ENCODE measurements at regions of chr18 and their contacts with region 1.

Region 1: GRCh38 chr18:20971886-20972267 is 139.7 kb downstream of the ROCK1 start:
- DNase-seq: peak; percentile 37
- H3K4me3 ChIP-seq: no peak overlapping the region
- H3K27ac ChIP-seq: no peak overlapping the region
- H3K4me1 ChIP-seq: no peaks in the 10 kb centered on the region
- CTCF ChIP-seq: peak; percentile 75

Region 2: DNA sequence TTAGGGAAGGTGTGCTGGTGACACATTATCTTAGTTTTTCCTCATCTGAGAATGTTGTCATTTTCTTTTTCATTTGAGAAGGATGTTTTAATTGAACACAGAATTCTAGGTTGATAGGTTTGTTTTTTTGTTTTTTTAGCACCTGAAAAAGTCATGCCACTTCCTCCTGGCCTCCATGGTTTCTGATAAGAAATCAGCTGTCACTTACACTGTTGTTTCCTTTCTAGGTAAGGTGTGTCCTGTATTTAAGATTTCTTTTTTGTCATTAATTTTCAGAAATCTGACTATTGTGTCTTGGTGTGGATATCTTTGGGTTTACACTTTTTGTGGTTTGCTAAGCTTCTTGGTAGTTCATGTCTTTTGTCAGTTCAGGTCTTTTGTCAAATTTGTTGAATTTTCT is 40.4 kb after region 1 on chr18:
- CTCF ChIA-PET with region 1: interaction called, 3 read pairs
- POLR2A ChIA-PET with region 1: no interaction called
- intact Hi-C with region 1: loop called (anchors 5 kb)
- DNase-seq: peak; percentile 6
- H3K4me3 ChIP-seq: no peak overlapping the region
- H3K27ac ChIP-seq: no peak overlapping the region
- H3K4me1 ChIP-seq: no peaks in the 10 kb centered on the region
- CTCF ChIP-seq: no peak

Region 3: GRCh38 chr18:21074336-21075323 is 102.8 kb after region 1 on chr18:
- CTCF ChIA-PET with region 1: no interaction called
- POLR2A ChIA-PET with region 1: no interaction called
- intact Hi-C with region 1: no loop called
- DNase-seq: peak; percentile 15
- H3K4me3 ChIP-seq: peak overlapping the region; percentile 36
- H3K27ac ChIP-seq: peak overlapping the region; percentile 33
- H3K4me1 ChIP-seq: peaks cover 44% of the 10 kb centered on the region
- CTCF ChIP-seq: no peak

Region 4: GRCh38 chr18:21099442-21099841 is 127.6 kb after region 1 on chr18:
- CTCF ChIA-PET with region 1: no interaction called
- POLR2A ChIA-PET with region 1: no interaction called
- intact Hi-C with region 1: no loop called
- DNase-seq: peak; percentile 82
- H3K4me3 ChIP-seq: peak overlapping the region; percentile 55
- H3K27ac ChIP-seq: peak overlapping the region; percentile 73
- H3K4me1 ChIP-seq: peaks cover 65% of the 10 kb centered on the region
- CTCF ChIP-seq: no peak

Region 5: GRCh38 chr18:21111341-21112139 is 139.7 kb after region 1 on chr18 and contains the start of gene ROCK1:
- CTCF ChIA-PET with region 1: no interaction called
- POLR2A ChIA-PET with region 1: interaction called, 6 read pairs
- intact Hi-C with region 1: loop called (anchors 10 kb)
- DNase-seq: peak; percentile 95
- H3K4me3 ChIP-seq: peak within 1 kb of the TSS; percentile 90
- H3K27ac ChIP-seq: peak within 1 kb of the TSS; percentile 89
- H3K4me1 ChIP-seq: peaks cover 30% of the 10 kb centered on the region
- CTCF ChIP-seq: no peak
- total RNA-seq, gene ROCK1: 43.2 and 48.5 TPM in 2 replicates

Region 6: DNA sequence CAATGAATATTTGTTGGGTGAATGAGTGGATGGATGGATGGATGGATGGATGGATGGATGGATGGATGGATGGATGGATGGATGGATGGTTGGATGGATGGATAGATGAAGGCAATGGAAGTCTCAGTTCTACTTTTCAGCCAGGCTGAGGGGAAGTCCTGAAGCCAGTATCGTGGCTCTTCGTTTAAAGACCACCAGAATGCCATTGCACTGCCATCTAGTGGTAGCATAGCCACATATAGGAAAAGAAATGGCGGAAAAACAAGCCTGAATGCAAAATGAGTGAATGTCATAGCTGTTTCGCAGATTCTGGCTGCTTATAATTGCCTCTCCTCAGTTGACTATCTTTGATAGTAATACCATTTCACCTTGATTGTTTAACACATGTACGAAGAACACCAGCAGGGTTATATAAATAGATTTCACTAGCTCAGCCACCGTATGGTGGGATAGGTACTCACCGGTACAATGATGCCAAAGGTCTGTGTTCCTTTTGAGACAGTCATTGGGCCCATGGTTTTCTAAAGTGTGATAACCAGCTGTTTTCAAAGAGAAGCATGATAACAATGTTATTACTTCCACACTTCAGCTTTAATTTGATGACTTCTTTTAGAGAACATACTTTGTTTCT is 207.8 kb after region 1 on chr18:
- CTCF ChIA-PET with region 1: no interaction called
- POLR2A ChIA-PET with region 1: no interaction called
- intact Hi-C with region 1: loop called (anchors 5 kb)
- DNase-seq: peak; percentile 79
- H3K4me3 ChIP-seq: no peak overlapping the region
- H3K27ac ChIP-seq: no peak overlapping the region
- H3K4me1 ChIP-seq: no peaks in the 10 kb centered on the region
- CTCF ChIP-seq: peak; percentile 92